Prostate gland (tissue), 2 donors: ENCODE measurements at regions of chr7 and their contacts with region 1.

Region 1: DNA sequence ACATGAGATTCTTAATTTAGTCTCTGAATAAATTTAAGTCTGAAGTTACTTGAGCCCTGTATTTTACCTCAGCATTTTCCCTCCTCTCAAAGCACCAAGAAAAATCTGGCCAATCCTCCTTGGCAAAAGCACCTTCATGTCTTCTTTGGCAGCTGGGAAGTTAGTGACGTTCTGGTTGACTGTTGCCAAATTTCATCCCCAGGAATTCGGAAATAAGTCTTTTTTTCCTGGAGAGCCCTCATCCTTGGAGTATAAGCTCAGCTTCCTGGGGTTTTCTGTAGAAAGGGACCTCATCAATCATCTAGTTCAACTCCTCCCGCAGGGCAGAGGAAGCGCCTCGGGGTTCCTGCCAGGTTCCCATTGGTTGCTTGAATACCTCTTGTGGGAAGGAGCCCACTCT is 377.6 kb downstream of the PHTF2 start:
- DNase-seq: no peak
- H3K4me3 ChIP-seq: no peak overlapping the region
- H3K27ac ChIP-seq: no peak overlapping the region
- H3K4me1 ChIP-seq: no peaks in the 10 kb centered on the region
- H3K27me3 ChIP-seq: no peaks in the 10 kb centered on the region
- CTCF ChIP-seq: no peak
- POLR2A ChIP-seq: no peak

Region 2: DNA sequence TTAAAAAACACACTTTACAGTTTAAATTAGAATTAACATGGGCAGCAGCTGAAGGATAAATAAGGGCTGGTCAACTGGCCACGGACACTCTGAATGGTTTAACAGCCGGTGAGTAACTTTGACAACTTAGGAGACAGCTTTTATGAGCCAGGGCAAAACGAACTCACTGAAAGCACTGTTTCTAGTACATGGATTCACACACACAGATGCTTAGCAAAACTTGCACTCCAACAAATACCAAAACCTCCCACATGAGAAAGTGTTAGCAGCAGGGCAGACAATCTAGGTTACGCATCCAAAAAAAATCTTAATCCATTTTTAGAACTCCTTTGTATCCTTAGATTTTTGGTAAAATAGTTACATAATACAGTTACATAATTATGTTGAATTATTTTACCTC is 108.8 kb after region 1 on chr7:
- intact Hi-C with region 1: loop called (anchors 10 kb)
- DNase-seq: no peak
- H3K4me3 ChIP-seq: no peak overlapping the region
- H3K27ac ChIP-seq: no peak overlapping the region
- H3K4me1 ChIP-seq: no peaks in the 10 kb centered on the region
- H3K27me3 ChIP-seq: no peaks in the 10 kb centered on the region
- CTCF ChIP-seq: no peak
- POLR2A ChIP-seq: no peak